ENCODE measurements at regions of chr7 and their contacts with region 1.

Region 1: DNA sequence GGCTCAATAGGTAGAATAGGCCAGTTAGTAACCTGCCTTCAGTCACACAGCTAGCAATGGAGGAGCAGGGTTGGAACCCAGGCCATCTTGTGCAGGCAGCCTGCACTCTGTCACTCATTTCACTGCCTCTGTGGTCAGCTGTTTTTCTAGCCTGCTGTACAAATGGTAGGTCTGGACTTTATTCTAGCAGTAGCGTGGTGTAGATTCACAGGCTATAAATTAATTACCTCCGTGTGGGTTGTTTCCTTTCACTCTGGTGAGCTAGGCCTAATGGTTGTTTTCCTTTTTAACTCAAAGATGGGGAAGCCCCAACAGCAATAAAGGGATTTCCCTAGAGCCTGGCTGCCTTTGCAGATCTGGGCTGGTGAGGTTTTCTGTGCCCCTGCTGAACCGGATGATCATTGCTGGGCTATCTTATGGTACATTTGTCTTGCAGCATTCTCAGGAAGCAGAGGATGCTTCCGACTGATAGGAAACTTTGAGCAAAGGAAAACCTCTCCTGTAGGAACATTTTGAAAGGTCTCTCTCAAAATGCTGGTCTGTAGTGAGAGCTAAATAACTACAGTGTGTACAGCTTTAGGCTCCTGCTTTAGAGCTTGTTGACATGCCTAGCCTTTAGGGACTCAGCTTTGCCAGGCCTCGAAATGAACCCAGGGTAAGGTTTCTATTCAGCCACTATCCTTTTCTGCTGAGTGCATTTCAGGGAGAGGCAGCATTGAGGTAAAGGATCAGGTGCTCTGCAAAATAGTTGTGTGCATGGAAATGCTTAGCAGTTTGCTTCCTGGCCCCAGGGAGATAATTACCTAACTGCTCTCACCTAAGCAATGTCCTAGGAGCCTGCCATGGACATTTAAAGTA is 157.4 kb downstream of the ST7 start:
- DNase-seq: peak; percentile 49 to 73 (median 57)
- H3K4me3 ChIP-seq: no peak overlapping the region
- H3K4me3 Mint-ChIP-seq: peak overlapping the region in 7 of 8 donors; percentile 33 to 74 (median 53)
- H3K27ac ChIP-seq: peak overlapping the region; percentile 52
- H3K27ac Mint-ChIP-seq: peak overlapping the region; percentile 76 to 91 (median 84)
- H3K4me1 ChIP-seq: peaks cover 20% of the 10 kb centered on the region
- H3K4me1 Mint-ChIP-seq: peaks cover 11 to 25% (median 21%) of the 10 kb centered on the region in 4 donors
- H3K27me3 ChIP-seq: no peaks in the 10 kb centered on the region
- H3K27me3 Mint-ChIP-seq: no peaks in the 10 kb centered on the region

Region 2: DNA sequence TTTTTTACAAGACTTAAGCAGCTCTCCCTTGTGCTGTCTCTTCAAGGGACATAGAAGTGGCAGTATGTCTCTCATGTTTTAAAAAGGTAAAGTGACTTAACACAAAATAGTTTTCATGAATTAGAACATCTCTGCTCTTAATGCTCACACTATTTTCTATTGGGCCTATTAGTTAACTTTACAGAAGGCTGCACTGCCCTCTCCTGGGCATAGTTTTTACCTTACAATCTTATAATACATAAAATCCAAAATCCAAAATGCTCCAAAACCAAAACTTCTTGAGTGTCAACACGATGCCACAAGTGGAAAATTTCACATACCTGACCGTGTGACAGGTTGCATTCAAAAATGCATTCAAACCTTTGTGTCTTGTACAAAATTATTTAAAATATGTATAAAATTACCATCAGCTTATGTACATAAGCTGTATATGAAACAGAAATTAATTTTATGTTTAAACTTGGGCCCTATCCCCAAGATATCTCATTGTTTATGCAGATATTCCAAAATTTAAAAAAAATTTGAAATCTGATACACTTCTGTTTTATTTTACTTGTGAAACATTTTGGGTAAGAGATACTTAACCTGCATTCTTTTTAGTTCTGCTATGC is 874.6 kb before region 1 on chr7:
- CTCF ChIA-PET with region 1: no interaction called
- POLR2A ChIA-PET with region 1: no interaction called
- intact Hi-C with region 1: no loop called
- DNase-seq: peak; percentile 50 to 65 (median 62)
- H3K4me3 ChIP-seq: no peak overlapping the region
- H3K4me3 Mint-ChIP-seq: peak overlapping the region in 4 of 8 donors; percentile 19 to 52 (median 24)
- H3K27ac ChIP-seq: no peak overlapping the region
- H3K27ac Mint-ChIP-seq: peak overlapping the region; percentile 4 to 84 (median 63)
- H3K4me1 ChIP-seq: peaks cover 50% of the 10 kb centered on the region
- H3K4me1 Mint-ChIP-seq: peaks cover 53 to 88% (median 54%) of the 10 kb centered on the region in 4 donors
- H3K27me3 ChIP-seq: no peaks in the 10 kb centered on the region
- H3K27me3 Mint-ChIP-seq: no peaks in the 10 kb centered on the region

Region 3: DNA sequence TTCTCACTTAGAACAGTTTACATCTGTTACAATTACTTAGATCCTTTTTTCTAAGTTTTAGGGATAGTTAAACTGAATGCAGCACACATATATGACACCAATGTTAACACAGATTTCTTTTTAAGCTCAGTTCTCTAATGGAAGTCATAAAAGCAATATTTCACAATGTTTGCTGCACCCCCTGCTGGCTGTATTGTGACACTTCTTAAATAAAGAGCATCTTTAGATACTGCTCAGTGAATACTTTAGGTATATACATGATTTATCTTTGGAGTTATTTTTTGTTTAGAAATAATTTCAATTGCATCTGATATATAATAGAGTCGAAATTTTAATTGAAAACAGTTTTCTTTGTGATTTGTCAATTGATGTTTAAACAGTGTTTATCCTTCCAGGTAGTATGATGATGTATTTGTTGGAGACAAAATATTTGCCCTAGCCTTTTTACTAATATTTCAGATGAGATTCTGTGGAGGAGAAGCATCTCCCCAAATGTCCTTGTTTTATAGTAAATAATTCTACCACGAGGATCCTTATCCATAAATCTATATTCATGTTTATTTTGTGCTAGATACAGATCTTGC is 17.0 kb after region 1 on chr7:
- CTCF ChIA-PET with region 1: interaction called, 36 read pairs
- POLR2A ChIA-PET with region 1: interaction called, 3 read pairs
- intact Hi-C with region 1: no loop called
- DNase-seq: peak in 4 of 5 donors; percentile 34 to 47 (median 44)
- H3K4me3 ChIP-seq: no peak overlapping the region
- H3K4me3 Mint-ChIP-seq: no peak overlapping the region
- H3K27ac ChIP-seq: no peak overlapping the region
- H3K27ac Mint-ChIP-seq: no peak overlapping the region
- H3K4me1 ChIP-seq: no peaks in the 10 kb centered on the region
- H3K4me1 Mint-ChIP-seq: peaks cover 0 to 4% (median 2%) of the 10 kb centered on the region in 4 donors
- H3K27me3 ChIP-seq: no peaks in the 10 kb centered on the region
- H3K27me3 Mint-ChIP-seq: no peaks in the 10 kb centered on the region

Measured in CD4-positive, alpha-beta memory T cell (primary cell).